Naive thymus-derived CD4-positive, alpha-beta T cell (primary cell): ENCODE measurements at regions of chr1 and their contacts with region 1.

Region 1: DNA sequence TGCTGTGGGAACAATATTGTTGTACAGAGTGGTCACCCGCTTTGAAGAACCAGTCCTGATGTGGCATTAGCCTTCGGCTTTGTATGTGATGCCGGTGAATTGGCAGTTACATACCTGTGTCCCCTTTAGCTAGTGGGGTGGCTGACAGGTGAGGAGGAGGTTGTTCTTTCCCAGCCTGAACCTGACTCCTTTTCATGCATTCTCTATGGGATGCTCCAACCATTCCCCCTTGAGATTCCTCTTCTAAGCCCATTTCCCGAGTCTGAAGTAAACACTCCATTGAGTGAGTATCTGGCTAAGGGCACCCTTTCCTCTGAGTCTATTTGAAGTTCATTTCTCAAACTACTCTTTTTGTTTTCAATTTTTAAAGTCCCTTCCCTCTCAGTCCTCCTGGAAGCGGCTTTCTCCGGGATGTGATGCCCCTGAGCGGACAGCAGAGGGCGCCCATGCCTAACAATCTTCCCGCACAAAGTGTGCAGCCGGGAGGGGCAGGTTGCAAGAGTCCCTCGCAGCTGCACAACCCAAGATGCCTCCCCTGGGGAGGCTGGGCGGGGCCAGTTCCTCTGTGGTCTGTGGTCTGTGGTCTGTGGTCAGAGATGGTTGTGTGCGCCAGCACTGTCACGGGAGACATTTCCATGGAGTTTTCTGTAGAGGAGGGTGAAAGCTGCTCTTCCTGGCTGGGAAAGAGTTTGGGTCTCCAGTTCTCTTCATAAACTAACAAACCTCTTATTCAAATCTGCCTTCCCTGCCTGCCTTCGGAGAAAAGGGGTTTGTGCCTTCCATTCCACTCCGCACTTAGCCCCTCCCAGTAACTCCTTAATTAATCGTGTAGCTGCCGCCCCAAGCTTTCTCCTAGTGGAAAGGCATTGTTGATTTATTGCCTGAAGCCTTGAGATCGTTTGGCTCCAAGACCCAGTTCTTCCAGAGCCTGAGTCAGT is 36.4 kb upstream of the LMX1A start:
- DNase-seq: peak; percentile 78 to 94 (median 91)
- ATAC-seq: peak; percentile 100
- H3K4me3 ChIP-seq: peak overlapping the region; percentile 28
- H3K4me3 Mint-ChIP-seq: peak overlapping the region; percentile 59 to 84 (median 75)
- H3K27ac ChIP-seq: no peak overlapping the region
- H3K27ac Mint-ChIP-seq: peak overlapping the region; percentile 45 to 94 (median 90)
- H3K4me1 ChIP-seq: peaks cover 13 to 14% of the 10 kb centered on the region in 2 donors
- H3K4me1 Mint-ChIP-seq: peaks cover 17 to 35% (median 26%) of the 10 kb centered on the region in 7 donors
- H3K27me3 ChIP-seq: peaks cover 7 to 21% of the 10 kb centered on the region in 2 donors
- H3K27me3 Mint-ChIP-seq: peaks cover 59 to 93% (median 80%) of the 10 kb centered on the region in 5 donors

Region 2: DNA sequence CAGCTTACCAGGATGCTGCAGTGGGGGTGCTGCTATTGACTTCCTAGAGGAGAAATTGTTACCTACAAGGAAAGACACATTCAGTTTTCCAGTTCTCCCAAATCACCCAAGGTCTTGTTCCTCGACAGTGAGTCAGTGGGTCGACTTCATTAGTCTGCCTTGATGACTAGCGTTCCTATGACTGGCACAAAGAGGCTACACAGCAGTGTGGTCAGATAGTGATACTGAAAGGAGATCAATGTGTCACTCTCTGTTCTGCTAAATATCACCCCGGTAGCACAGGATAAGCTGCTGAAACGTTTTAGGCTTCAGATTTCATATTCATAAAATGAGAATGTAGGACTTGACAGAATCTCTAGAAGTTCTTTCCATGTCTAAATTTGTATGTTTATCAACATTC is 393.8 kb before region 1 on chr1:
- CTCF ChIA-PET with region 1: no interaction called
- POLR2A ChIA-PET with region 1: no interaction called
- intact Hi-C with region 1: no loop called
- DNase-seq: no peak
- ATAC-seq: no peak
- H3K4me3 ChIP-seq: no peak overlapping the region
- H3K4me3 Mint-ChIP-seq: no peak overlapping the region
- H3K27ac ChIP-seq: no peak overlapping the region
- H3K27ac Mint-ChIP-seq: no peak overlapping the region
- H3K4me1 ChIP-seq: no peaks in the 10 kb centered on the region
- H3K4me1 Mint-ChIP-seq: no peaks in the 10 kb centered on the region
- H3K27me3 ChIP-seq: no peaks in the 10 kb centered on the region
- H3K27me3 Mint-ChIP-seq: peaks cover 0 to 11% (median 0%) of the 10 kb centered on the region in 5 donors

Region 3: GRCh38 chr1:165367375-165367993 is 25.4 kb before region 1 on chr1:
- CTCF ChIA-PET with region 1: interaction called, 28 read pairs
- POLR2A ChIA-PET with region 1: no interaction called
- intact Hi-C with region 1: loop called in 1 of 2 experiments (anchors 1 kb)
- DNase-seq: peak; percentile 41 to 80 (median 62)
- ATAC-seq: peak; percentile 81
- H3K4me3 ChIP-seq: no peak overlapping the region
- H3K4me3 Mint-ChIP-seq: no peak overlapping the region
- H3K27ac ChIP-seq: no peak overlapping the region
- H3K27ac Mint-ChIP-seq: no peak overlapping the region
- H3K4me1 ChIP-seq: no peaks in the 10 kb centered on the region
- H3K4me1 Mint-ChIP-seq: peaks cover 0 to 6% (median 0%) of the 10 kb centered on the region in 7 donors
- H3K27me3 ChIP-seq: no peaks in the 10 kb centered on the region
- H3K27me3 Mint-ChIP-seq: peaks cover 67 to 79% (median 72%) of the 10 kb centered on the region in 5 donors

Region 4: DNA sequence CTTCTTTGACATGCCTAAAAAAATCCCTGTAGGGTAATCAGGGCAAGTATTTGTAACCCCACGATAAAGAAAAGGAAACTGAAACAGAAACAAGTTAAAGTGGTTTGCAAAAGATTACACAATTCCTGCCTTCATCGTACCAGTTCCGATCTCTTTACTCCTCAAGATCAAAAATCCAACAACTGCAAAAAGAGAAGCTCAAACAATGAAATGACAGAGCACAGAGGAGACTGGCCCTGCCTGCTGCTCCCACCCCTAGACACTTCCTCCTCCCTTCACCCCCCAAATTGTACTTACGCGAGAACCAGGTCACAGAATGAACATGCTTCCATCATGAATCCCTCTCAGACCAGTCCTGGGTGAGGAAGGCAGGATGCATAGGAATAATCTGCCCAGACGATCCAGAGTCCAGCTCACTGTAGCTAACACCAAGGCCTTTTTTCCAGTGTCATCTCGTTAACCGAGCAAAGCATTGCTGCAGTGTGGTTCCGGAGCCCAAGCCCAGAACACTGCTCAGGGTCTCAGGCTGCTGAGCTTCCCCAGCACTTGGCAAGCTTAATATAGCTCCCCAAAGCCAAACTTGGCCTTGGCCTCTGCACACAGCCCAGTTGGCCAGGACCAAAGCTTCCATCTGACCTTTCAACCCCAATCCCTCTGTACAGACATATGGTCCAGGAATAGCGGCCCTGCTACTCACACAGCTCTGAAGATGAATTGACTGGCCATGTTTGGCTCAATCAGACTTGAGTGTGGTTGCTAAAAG is 31.7 kb after region 1 on chr1:
- CTCF ChIA-PET with region 1: no interaction called
- POLR2A ChIA-PET with region 1: no interaction called
- intact Hi-C with region 1: loop called (anchors 1 kb)
- DNase-seq: peak in 6 of 9 donors; percentile 22 to 56 (median 46)
- ATAC-seq: peak; percentile 69
- H3K4me3 ChIP-seq: peak overlapping the region; percentile 47
- H3K4me3 Mint-ChIP-seq: peak overlapping the region; percentile 79 to 93 (median 87)
- H3K27ac ChIP-seq: peak overlapping the region; percentile 61
- H3K27ac Mint-ChIP-seq: peak overlapping the region; percentile 85 to 95 (median 91)
- H3K4me1 ChIP-seq: peaks cover 5 to 24% of the 10 kb centered on the region in 2 donors
- H3K4me1 Mint-ChIP-seq: peaks cover 14 to 53% (median 38%) of the 10 kb centered on the region in 7 donors
- H3K27me3 ChIP-seq: no peaks in the 10 kb centered on the region
- H3K27me3 Mint-ChIP-seq: peaks cover 0 to 23% (median 0%) of the 10 kb centered on the region in 5 donors

Region 5: GRCh38 chr1:165467706-165468105 is 74.8 kb after region 1 on chr1:
- CTCF ChIA-PET with region 1: no interaction called
- POLR2A ChIA-PET with region 1: no interaction called
- intact Hi-C with region 1: no loop called
- DNase-seq: no peak
- ATAC-seq: no peak
- H3K4me3 ChIP-seq: no peak overlapping the region
- H3K4me3 Mint-ChIP-seq: no peak overlapping the region
- H3K27ac ChIP-seq: no peak overlapping the region
- H3K27ac Mint-ChIP-seq: no peak overlapping the region
- H3K4me1 ChIP-seq: no peaks in the 10 kb centered on the region
- H3K4me1 Mint-ChIP-seq: no peaks in the 10 kb centered on the region
- H3K27me3 ChIP-seq: no peaks in the 10 kb centered on the region
- H3K27me3 Mint-ChIP-seq: peaks cover 6 to 18% (median 14%) of the 10 kb centered on the region in 5 donors

Region 6: DNA sequence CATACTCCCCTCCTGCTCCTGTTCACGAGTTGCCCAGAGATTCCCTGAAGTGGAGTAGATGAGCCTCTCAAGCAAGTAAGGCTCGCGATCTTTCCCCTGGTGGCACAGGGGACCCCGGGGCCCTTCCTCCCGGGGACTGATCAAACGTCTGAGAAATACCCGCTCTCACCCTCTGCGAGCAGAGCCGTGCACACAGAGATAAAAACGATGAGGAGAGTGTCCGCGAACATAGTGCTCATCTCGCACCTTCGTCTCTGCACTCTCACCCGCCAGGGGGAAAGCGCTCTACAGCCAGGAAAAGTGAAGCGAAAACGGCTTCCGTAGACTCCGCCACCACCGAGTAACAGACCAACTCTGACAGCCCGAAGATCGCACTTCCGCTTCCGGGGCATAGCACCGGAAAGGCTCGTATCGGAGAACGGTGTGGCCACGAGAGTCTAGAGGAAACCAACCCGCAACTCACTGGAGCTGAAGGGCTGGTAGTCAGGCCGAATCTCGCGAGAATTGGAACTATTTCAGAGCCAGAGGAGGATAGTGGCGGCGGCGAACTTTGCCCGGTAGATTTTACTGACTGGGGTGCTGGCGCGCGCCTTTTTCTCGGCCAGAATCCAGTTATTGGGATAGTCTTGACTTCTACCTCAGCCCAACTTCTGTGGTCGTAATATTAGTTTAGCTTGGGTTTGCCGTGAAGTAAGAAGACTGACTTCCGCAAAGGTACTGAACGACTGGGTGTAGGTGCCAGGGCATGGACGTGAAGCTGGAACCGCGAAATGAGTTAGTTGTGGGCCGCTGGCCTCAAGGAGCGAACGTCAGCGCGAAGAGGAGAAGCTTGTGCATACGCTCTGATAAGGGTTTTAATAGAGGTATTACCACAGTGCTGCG is 375.9 kb after region 1 on chr1 and contains the start of gene TMCO1:
- CTCF ChIA-PET with region 1: no interaction called
- POLR2A ChIA-PET with region 1: interaction called, 4 read pairs
- intact Hi-C with region 1: loop called (anchors 1 to 5 kb)
- DNase-seq: peak; percentile 76 to 97 (median 94)
- ATAC-seq: peak; percentile 98
- H3K4me3 ChIP-seq: peak within 1 kb of the TSS; percentile 94
- H3K4me3 Mint-ChIP-seq: peak within 1 kb of the TSS; percentile 90 to 100 (median 97)
- H3K27ac ChIP-seq: peak within 1 kb of the TSS; percentile 85
- H3K27ac Mint-ChIP-seq: peak within 1 kb of the TSS; percentile 91 to 100 (median 98)
- H3K4me1 ChIP-seq: peaks cover 19 to 32% of the 10 kb centered on the region in 2 donors
- H3K4me1 Mint-ChIP-seq: peaks cover 44 to 83% (median 68%) of the 10 kb centered on the region in 7 donors
- H3K27me3 ChIP-seq: no peaks in the 10 kb centered on the region
- H3K27me3 Mint-ChIP-seq: no peaks in the 10 kb centered on the region
- total RNA-seq, gene TMCO1: 30.4 to 97.1 (median 49.8) TPM

Region 7: GRCh38 chr1:165914136-165914798 is 521.4 kb after region 1 on chr1:
- CTCF ChIA-PET with region 1: interaction called, 6 read pairs
- POLR2A ChIA-PET with region 1: interaction called, 3 read pairs
- intact Hi-C with region 1: loop called (anchors 1 kb)
- DNase-seq: peak; percentile 23 to 76 (median 64)
- ATAC-seq: peak; percentile 89
- H3K4me3 ChIP-seq: no peak overlapping the region
- H3K4me3 Mint-ChIP-seq: no peak overlapping the region
- H3K27ac ChIP-seq: no peak overlapping the region
- H3K27ac Mint-ChIP-seq: no peak overlapping the region
- H3K4me1 ChIP-seq: no peaks in the 10 kb centered on the region
- H3K4me1 Mint-ChIP-seq: peaks cover 0 to 4% (median 2%) of the 10 kb centered on the region in 7 donors
- H3K27me3 ChIP-seq: no peaks in the 10 kb centered on the region
- H3K27me3 Mint-ChIP-seq: peaks cover 0 to 5% (median 0%) of the 10 kb centered on the region in 5 donors

Region 8: GRCh38 chr1:166489670-166490436 is 1097.0 kb after region 1 on chr1:
- CTCF ChIA-PET with region 1: no interaction called
- POLR2A ChIA-PET with region 1: no interaction called
- intact Hi-C with region 1: loop called in 1 of 2 experiments (anchors 5 kb)
- DNase-seq: peak; percentile 29 to 69 (median 61)
- ATAC-seq: peak; percentile 83
- H3K4me3 ChIP-seq: peak overlapping the region; percentile 92
- H3K4me3 Mint-ChIP-seq: no peak overlapping the region
- H3K27ac ChIP-seq: peak overlapping the region; percentile 81
- H3K27ac Mint-ChIP-seq: no peak overlapping the region
- H3K4me1 ChIP-seq: peaks cover 15 to 17% of the 10 kb centered on the region in 2 donors
- H3K4me1 Mint-ChIP-seq: peaks cover 0 to 20% (median 0%) of the 10 kb centered on the region in 7 donors
- H3K27me3 ChIP-seq: no peaks in the 10 kb centered on the region
- H3K27me3 Mint-ChIP-seq: peaks cover 0 to 2% (median 0%) of the 10 kb centered on the region in 5 donors